B cell (primary cell): ENCODE measurements at regions of chr1 and their contacts with region 1.

Region 1: GRCh38 chr1:194060481-194060880 is 874.1 kb upstream of the B3GALT2 start:
- DNase-seq: no peak
- ATAC-seq: no peak
- H3K4me3 ChIP-seq: no peak overlapping the region
- H3K4me3 Mint-ChIP-seq: no peak overlapping the region
- H3K27ac ChIP-seq: no peak overlapping the region
- H3K27ac Mint-ChIP-seq: no peak overlapping the region
- H3K4me1 ChIP-seq: no peaks in the 10 kb centered on the region
- H3K4me1 Mint-ChIP-seq: peaks cover 2% of the 10 kb centered on the region
- H3K27me3 ChIP-seq: no peaks in the 10 kb centered on the region
- H3K27me3 Mint-ChIP-seq: no peaks in the 10 kb centered on the region
- CTCF ChIP-seq: no peak

Region 2: GRCh38 chr1:193741228-193741627 is 319.3 kb before region 1 on chr1:
- CTCF ChIA-PET with region 1: no interaction called
- POLR2A ChIA-PET with region 1: no interaction called
- intact Hi-C with region 1: no loop called
- DNase-seq: no peak
- ATAC-seq: no peak
- H3K4me3 ChIP-seq: no peak overlapping the region
- H3K4me3 Mint-ChIP-seq: no peak overlapping the region
- H3K27ac ChIP-seq: no peak overlapping the region
- H3K27ac Mint-ChIP-seq: no peak overlapping the region
- H3K4me1 ChIP-seq: no peaks in the 10 kb centered on the region
- H3K4me1 Mint-ChIP-seq: no peaks in the 10 kb centered on the region
- H3K27me3 ChIP-seq: no peaks in the 10 kb centered on the region
- H3K27me3 Mint-ChIP-seq: no peaks in the 10 kb centered on the region
- CTCF ChIP-seq: no peak

Region 3: GRCh38 chr1:194133163-194133562 is 72.7 kb after region 1 on chr1:
- CTCF ChIA-PET with region 1: no interaction called
- POLR2A ChIA-PET with region 1: no interaction called
- intact Hi-C with region 1: loop called (anchors 2 kb)
- DNase-seq: no peak
- ATAC-seq: no peak
- H3K4me3 ChIP-seq: no peak overlapping the region
- H3K4me3 Mint-ChIP-seq: no peak overlapping the region
- H3K27ac ChIP-seq: no peak overlapping the region
- H3K27ac Mint-ChIP-seq: no peak overlapping the region
- H3K4me1 ChIP-seq: no peaks in the 10 kb centered on the region
- H3K4me1 Mint-ChIP-seq: no peaks in the 10 kb centered on the region
- H3K27me3 ChIP-seq: no peaks in the 10 kb centered on the region
- H3K27me3 Mint-ChIP-seq: no peaks in the 10 kb centered on the region
- CTCF ChIP-seq: no peak